ENCODE measurements at regions of chr13 and their contacts with region 1.

Region 1: DNA sequence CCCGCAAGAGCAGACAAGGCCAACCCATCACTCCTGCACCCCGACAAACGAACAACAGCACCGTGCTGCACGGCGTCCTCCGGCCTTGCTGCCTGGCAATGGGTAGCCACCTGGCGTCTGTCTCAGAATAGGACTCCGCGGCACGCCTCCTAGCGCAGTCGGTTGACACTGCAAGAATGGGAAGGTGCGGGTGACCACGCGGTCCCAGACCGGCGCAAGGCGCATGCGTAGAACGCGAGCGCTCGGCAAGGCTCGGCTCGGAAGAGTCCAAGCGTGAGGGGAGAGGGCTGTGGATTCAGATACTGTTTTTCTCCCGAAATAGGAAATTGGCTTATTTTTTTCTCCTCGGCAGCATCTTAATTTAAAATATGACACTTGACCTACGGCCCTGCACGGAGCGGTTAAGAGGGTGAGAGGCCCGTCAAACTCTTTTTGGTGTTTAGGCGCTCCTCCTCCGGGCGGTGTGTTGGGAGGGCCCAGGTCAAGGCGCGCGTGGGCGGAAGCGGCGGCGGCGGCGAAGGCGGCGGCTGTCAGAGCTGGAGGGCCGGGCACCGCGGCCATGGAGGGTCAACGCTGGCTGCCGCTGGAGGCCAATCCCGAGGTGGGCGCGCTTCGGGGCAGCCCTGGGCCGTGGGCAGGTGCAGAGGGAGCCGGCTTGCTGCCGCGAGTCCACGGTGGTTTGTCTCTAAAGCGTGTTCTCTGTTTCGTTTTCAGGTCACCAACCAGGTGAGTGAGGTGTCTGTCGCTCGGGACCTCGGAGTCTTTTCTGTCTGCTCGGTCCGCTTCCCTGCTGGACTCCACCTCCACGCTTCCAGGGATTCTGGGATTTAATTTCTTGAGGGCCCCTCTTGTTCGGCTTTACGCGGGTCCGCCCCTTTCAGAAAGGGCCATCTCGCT is at the start of gene UCHL3:
- DNase-seq: peak; percentile 95
- H3K4me3 ChIP-seq: peak within 1 kb of the TSS; percentile 81 to 92 (median 86)
- H3K27ac ChIP-seq: peak within 1 kb of the TSS; percentile 96
- H3K4me1 ChIP-seq: peaks cover 10% of the 10 kb centered on the region
- H3K27me3 ChIP-seq: no peaks in the 10 kb centered on the region
- CTCF ChIP-seq: peak; percentile 78 to 91
- POLR2A ChIP-seq: peak; percentile 84
- total RNA-seq, gene UCHL3: 46.8 and 49.2 TPM in 2 replicates

Region 2: DNA sequence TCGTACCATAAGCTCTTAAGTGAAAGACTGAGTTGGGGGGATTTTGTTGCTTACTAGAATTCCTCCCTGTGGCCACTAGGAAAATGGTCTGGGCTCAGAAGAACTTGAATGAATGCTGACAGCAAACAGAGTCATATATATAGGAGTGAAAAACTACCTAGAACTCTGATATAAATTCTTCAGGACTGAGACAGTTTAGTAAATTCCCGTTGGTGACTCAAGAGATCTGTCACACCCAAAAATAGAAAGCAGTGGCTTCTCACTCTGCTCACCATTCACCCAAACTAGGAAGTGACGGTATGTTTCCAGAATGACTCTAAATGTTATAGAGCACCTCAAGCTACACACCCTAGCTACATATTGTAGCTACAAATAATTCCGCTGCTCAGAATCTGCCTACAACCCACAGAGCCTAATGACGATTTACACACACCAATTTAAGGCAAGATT is 183.8 kb before region 1 on chr13:
- CTCF ChIA-PET with region 1: interaction called, 8 read pairs
- POLR2A ChIA-PET with region 1: no interaction called
- dilution Hi-C with region 1: no loop called
- intact Hi-C with region 1: loop called (anchors 1 kb)
- DNase-seq: peak; percentile 84
- H3K4me3 ChIP-seq: peak overlapping the region; percentile 23 to 96 (median 68)
- H3K27ac ChIP-seq: peak overlapping the region; percentile 98
- H3K4me1 ChIP-seq: peaks cover 49% of the 10 kb centered on the region
- H3K27me3 ChIP-seq: no peaks in the 10 kb centered on the region
- CTCF ChIP-seq: peak; percentile 17 to 19
- POLR2A ChIP-seq: no peak

Region 3: GRCh38 chr13:75372517-75372916 is 177.0 kb before region 1 on chr13:
- CTCF ChIA-PET with region 1: interaction called, 8 read pairs
- POLR2A ChIA-PET with region 1: no interaction called
- dilution Hi-C with region 1: no loop called
- intact Hi-C with region 1: loop called (anchors 1 kb)
- DNase-seq: peak; percentile 55
- H3K4me3 ChIP-seq: no peak overlapping the region
- H3K27ac ChIP-seq: no peak overlapping the region
- H3K4me1 ChIP-seq: peaks cover 18% of the 10 kb centered on the region
- H3K27me3 ChIP-seq: no peaks in the 10 kb centered on the region
- CTCF ChIP-seq: peak; percentile 36 to 49
- POLR2A ChIP-seq: no peak

Region 4: DNA sequence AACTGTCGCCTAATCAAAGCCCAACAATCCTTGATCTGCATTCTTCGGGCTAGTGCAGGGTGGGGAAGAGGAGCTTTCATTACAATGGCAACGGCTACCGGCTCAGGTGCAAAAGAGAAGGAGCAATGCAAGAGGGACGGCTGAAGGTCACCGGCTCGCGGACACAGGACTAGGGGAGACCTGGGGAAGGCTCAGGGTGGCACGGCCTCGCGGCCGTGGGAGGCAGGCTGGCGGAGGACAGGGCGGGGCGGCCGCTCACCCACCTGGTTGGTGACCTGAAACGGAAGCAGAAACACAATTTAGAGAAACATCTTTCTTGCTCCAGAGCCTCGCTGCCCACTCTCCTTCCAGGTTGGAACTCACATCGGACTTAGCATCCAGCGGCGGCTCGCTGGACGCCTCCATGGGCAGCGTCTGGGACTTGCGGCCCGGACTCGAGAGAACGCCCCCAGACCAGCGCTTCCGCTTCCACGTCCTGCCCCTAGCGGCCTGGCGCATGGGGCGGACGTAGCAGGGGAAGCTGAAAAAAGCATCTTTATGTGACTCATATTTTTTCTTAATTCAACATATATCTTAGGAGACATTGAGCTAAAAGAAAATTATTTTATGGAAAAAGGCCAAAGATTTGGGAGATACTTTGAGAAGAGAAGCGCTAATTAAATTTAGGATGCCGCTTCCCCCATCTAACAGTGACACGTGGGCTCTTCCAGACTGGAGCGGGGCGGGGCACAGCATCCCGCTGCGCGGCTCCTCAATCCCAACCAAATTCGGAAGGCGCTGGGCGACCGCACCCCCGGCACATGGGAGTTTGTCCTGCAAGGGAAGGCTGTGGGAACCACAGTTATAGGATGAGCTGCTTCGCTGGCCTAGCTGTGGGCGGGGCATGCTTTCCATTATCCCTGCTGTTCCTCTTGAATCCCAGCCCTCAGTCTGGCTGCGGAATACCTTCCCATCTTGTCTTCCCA is 11.8 kb before region 1 on chr13 and contains the start of gene COMMD6:
- CTCF ChIA-PET with region 1: interaction called, 4 read pairs
- POLR2A ChIA-PET with region 1: no interaction called
- dilution Hi-C with region 1: no loop called
- intact Hi-C with region 1: loop called (anchors 1 kb)
- DNase-seq: peak; percentile 83
- H3K4me3 ChIP-seq: peak within 1 kb of the TSS; percentile 56 to 81 (median 64)
- H3K27ac ChIP-seq: peak within 1 kb of the TSS; percentile 79
- H3K4me1 ChIP-seq: peaks cover 8% of the 10 kb centered on the region
- H3K27me3 ChIP-seq: no peaks in the 10 kb centered on the region
- CTCF ChIP-seq: no peak
- POLR2A ChIP-seq: peak; percentile 97
- total RNA-seq, gene COMMD6: 112 and 122 TPM in 2 replicates

Region 5: GRCh38 chr13:75938811-75939560 is 389.5 kb after region 1 on chr13:
- CTCF ChIA-PET with region 1: no interaction called
- POLR2A ChIA-PET with region 1: no interaction called
- dilution Hi-C with region 1: no loop called
- intact Hi-C with region 1: no loop called
- DNase-seq: no peak
- H3K4me3 ChIP-seq: no peak overlapping the region
- H3K27ac ChIP-seq: no peak overlapping the region
- H3K4me1 ChIP-seq: no peaks in the 10 kb centered on the region
- H3K27me3 ChIP-seq: no peaks in the 10 kb centered on the region
- CTCF ChIP-seq: no peak
- POLR2A ChIP-seq: no peak

Region 6: GRCh38 chr13:76271728-76272232 is 722.3 kb after region 1 on chr13:
- CTCF ChIA-PET with region 1: no interaction called
- POLR2A ChIA-PET with region 1: no interaction called
- dilution Hi-C with region 1: no loop called
- intact Hi-C with region 1: no loop called
- DNase-seq: no peak
- H3K4me3 ChIP-seq: no peak overlapping the region
- H3K27ac ChIP-seq: no peak overlapping the region
- H3K4me1 ChIP-seq: no peaks in the 10 kb centered on the region
- H3K27me3 ChIP-seq: no peaks in the 10 kb centered on the region
- CTCF ChIP-seq: no peak
- POLR2A ChIP-seq: no peak

Measured in endothelial cell of umbilical vein (primary cell).